CD8-positive, alpha-beta T cell (primary cell): ENCODE measurements at regions of chr7 and their contacts with region 1.

Region 1: DNA sequence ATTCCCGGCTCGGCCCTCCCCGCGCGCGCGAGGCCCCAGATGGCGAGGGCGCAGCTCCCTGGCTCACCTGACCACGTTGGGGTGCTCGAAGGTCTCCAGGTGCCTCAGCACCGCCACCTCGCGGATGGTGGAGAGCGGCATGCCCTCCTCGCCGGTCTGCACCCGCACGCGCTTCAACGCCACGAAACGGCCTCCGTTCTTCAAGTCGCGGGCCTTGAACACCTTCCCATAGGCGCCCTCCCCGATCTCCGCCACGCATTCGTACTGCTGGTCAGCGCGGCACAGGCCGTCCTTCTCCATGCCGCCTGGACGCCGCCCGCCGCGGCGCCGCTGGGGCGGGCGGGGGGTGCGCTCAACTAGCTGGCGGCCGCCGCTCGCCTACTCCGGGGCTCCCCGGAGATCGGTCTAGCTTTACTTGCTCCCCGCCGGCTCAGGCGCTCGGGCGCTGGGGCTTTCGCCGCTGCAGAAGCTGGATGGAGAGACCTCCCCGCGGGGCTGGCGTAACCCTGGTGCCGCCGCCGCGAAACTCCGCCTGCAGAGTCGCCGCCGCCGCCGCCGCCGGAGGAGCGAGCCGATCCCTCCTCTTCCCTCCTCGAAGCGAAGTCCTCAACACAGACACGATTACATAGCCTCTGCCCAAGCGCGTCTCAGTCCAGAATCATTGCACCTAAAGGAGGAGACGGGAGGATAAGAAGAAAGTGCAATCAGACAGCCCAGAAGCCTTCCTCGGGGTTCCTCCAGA is 3.2 kb downstream of the CDK6 start:
- DNase-seq: peak; percentile 78 to 93 (median 88)
- ATAC-seq: peak; percentile 71
- H3K4me3 ChIP-seq: peak overlapping the region; percentile 85 to 96
- H3K4me3 Mint-ChIP-seq: peak overlapping the region; percentile 98
- H3K27ac ChIP-seq: peak overlapping the region; percentile 46 to 68
- H3K27ac Mint-ChIP-seq: peak overlapping the region; percentile 92
- H3K4me1 ChIP-seq: peaks cover 39% of the 10 kb centered on the region
- H3K4me1 Mint-ChIP-seq: peaks cover 60% of the 10 kb centered on the region
- H3K27me3 ChIP-seq: peaks cover 0 to 3% of the 10 kb centered on the region in 2 experiments
- H3K27me3 Mint-ChIP-seq: peaks cover 4% of the 10 kb centered on the region
- CTCF ChIP-seq: peak; percentile 81

Region 2: DNA sequence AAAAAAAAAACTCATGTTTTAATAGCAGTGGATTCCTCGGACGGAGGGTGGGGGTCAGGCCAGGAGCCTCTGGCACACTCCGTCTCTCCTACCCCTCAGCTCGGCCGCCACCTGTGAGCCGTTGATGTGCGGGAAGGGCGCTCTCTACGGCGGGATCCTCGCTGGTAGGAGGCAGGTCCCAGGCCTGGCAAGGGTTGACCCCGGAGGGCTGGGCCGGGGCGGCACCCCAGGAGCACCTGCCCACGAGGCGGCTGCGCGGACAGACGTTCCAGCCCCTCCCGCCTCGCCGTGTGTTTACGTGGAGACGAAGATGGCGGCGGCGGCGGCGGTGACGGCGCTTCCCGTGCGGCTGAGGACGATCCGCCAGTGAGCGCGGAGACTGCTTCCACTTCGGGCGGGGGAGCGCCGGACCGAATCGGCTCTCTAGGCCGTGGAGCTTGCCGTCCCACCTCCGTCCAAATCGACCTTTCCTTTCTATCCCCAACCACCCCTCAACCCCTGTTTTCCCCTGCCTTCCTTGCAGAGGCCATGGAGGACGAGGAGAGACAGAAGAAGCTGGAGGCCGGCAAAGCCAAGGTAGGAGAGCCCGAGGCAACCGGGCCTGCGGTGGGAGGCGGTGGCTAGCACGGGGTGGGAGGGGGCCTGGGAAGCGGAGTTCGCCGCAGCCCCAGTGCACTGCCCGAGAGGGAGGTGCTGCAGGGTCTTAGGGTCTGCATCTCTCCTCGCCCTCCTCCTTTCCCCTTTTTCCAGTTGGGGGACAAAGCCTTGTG is 892.4 kb before region 1 on chr7 and contains the start of gene AKAP9:
- CTCF ChIA-PET with region 1: no interaction called
- POLR2A ChIA-PET with region 1: no interaction called
- intact Hi-C with region 1: loop called in 1 of 2 experiments (anchors 10 kb)
- DNase-seq: peak; percentile 71 to 93 (median 89)
- ATAC-seq: peak; percentile 84
- H3K4me3 ChIP-seq: peak within 1 kb of the TSS; percentile 78 to 92
- H3K4me3 Mint-ChIP-seq: peak within 1 kb of the TSS; percentile 93
- H3K27ac ChIP-seq: peak within 1 kb of the TSS; percentile 91 to 93
- H3K27ac Mint-ChIP-seq: peak within 1 kb of the TSS; percentile 96
- H3K4me1 ChIP-seq: peaks cover 21% of the 10 kb centered on the region
- H3K4me1 Mint-ChIP-seq: peaks cover 45% of the 10 kb centered on the region
- H3K27me3 ChIP-seq: no peaks in the 10 kb centered on the region
- H3K27me3 Mint-ChIP-seq: no peaks in the 10 kb centered on the region
- CTCF ChIP-seq: no peak
- total RNA-seq, gene AKAP9: 61.2 to 61.3 TPM

Region 3: DNA sequence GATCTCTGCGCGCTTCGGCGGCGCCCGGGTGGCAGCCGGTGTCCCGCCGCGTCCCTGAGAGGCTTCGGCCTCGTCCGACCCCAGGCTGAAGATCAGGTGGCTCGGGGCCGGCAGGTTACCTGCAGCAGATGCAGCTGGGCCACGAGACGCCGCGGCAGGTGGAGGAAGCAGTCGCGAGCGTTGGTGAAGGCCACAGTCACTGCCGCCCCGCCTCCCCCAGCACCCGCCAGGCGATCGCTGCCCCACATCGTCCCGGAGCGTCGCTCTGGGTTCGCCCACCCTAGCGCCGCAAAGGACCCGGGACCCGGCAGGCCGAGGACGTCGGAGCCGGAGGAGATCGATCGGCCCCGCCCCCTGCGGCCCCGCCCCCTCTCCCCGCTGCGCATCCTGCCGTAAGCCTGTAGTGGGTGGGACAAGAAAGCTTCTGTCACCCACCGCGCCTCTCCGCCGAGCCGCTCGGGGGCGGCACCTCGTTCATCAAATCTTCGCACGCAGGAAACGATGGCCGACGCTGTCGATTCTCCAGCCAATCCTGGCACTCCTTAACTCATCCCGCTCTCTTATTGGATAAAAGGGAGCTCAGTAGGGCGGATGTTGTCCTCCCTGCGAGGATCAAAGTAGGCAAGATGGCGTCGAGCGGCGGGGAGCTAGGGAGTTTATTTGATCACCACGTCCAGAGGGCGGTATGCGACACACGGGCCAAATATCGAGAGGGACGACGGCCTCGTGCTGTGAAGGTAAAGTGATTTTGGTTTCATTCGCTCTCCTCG is 304.8 kb before region 1 on chr7 and contains the starts of genes PEX1 and RBM48:
- CTCF ChIA-PET with region 1: interaction called, 3 read pairs
- POLR2A ChIA-PET with region 1: interaction called, 3 read pairs
- intact Hi-C with region 1: loop called (anchors 1 to 5 kb)
- DNase-seq: peak; percentile 90 to 99 (median 94)
- ATAC-seq: peak; percentile 89
- H3K4me3 ChIP-seq: peak within 1 kb of the TSS; percentile 94 to 95
- H3K4me3 Mint-ChIP-seq: peak within 1 kb of the TSS; percentile 91
- H3K27ac ChIP-seq: peak within 1 kb of the TSS; percentile 91 to 98
- H3K27ac Mint-ChIP-seq: peak within 1 kb of the TSS; percentile 98
- H3K4me1 ChIP-seq: peaks cover 22% of the 10 kb centered on the region
- H3K4me1 Mint-ChIP-seq: peaks cover 51% of the 10 kb centered on the region
- H3K27me3 ChIP-seq: no peaks in the 10 kb centered on the region
- H3K27me3 Mint-ChIP-seq: no peaks in the 10 kb centered on the region
- CTCF ChIP-seq: no peak
- total RNA-seq, gene PEX1: 17.8 to 18.1 TPM
- total RNA-seq, gene RBM48: 52.7 to 54.6 TPM

Region 4: GRCh38 chr7:92621026-92621540 is 212.1 kb before region 1 on chr7:
- CTCF ChIA-PET with region 1: interaction called, 44 read pairs
- POLR2A ChIA-PET with region 1: interaction called, 6 read pairs
- intact Hi-C with region 1: loop called (anchors 1 kb)
- DNase-seq: peak; percentile 53 to 92 (median 77)
- ATAC-seq: peak; percentile 93
- H3K4me3 ChIP-seq: no peak overlapping the region
- H3K4me3 Mint-ChIP-seq: peak overlapping the region; percentile 6
- H3K27ac ChIP-seq: peak overlapping the region in 1 of 2 experiments; percentile 33
- H3K27ac Mint-ChIP-seq: peak overlapping the region; percentile 79
- H3K4me1 ChIP-seq: peaks cover 18% of the 10 kb centered on the region
- H3K4me1 Mint-ChIP-seq: peaks cover 20% of the 10 kb centered on the region
- H3K27me3 ChIP-seq: no peaks in the 10 kb centered on the region
- H3K27me3 Mint-ChIP-seq: no peaks in the 10 kb centered on the region
- CTCF ChIP-seq: peak; percentile 60

Region 5: DNA sequence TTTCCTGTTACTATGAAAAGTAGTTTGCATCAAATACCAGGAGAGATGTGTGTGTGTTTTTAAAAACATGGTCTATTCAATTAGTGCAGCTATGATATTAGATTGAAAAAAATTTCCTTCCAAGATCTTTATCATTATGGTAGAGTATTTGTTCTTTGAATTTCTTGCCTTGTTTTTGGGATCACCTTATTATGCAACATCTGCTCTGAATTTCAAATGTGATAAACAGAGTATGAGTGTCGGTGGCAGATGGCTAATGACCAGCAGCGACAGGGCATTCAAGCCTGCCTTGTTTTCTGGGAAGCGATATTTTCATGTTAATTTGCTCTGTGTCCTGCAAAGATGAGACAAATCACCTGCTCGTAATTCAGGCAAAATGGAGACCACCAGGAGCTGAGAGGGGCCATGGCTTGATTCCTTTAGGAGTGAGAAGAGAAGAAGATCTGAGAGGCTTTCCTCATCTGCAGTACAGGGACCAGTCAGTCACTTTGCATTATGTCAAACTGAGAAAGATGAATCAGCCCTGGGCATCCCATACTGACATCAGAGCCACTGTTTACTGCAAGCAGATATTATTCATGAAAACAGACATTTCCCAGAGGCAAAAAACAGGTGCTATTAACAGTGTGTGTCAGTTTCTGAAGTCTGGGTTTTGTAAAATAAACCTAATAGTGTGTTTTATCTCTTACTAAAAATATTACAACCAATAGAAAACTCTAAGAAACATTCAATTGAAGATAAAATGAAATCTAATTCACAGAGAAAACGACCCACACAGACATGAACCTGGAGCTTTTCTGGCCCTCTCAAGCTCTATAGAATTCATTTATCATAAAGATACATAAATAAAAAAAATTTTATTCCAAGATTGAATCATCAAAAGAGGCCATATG is 64.4 kb before region 1 on chr7:
- CTCF ChIA-PET with region 1: no interaction called
- POLR2A ChIA-PET with region 1: interaction called, 3 read pairs
- intact Hi-C with region 1: loop called in 1 of 2 experiments (anchors 5 kb)
- DNase-seq: no peak
- ATAC-seq: no peak
- H3K4me3 ChIP-seq: no peak overlapping the region
- H3K4me3 Mint-ChIP-seq: no peak overlapping the region
- H3K27ac ChIP-seq: no peak overlapping the region
- H3K27ac Mint-ChIP-seq: no peak overlapping the region
- H3K4me1 ChIP-seq: no peaks in the 10 kb centered on the region
- H3K4me1 Mint-ChIP-seq: peaks cover 19% of the 10 kb centered on the region
- H3K27me3 ChIP-seq: no peaks in the 10 kb centered on the region
- H3K27me3 Mint-ChIP-seq: no peaks in the 10 kb centered on the region
- CTCF ChIP-seq: no peak

Region 6: DNA sequence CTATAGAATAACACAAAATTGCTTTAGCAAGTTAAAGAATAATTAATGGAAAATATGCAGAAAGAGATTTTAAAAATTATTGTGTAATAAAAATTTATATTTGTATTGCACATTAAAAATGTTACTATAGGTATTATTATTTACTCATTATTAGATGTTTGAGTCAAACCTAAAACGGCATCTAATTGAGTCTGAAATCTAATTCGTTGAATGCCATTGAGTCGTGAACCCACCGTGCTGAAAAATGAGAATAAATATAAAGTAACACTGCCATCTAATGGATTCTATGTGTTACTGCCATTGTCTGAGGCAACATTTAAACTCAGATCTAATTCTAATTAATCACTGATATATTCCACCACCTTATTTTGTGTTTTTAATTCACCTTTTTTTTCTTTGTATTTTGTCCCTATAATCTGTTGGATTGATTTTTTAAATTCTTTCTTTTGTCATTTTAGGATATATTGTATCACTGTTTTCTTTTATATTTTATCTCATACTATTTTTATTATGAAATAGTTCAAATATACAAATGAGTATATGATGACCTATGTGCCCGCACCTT is 222.4 kb after region 1 on chr7:
- CTCF ChIA-PET with region 1: interaction called, 9 read pairs
- POLR2A ChIA-PET with region 1: no interaction called
- intact Hi-C with region 1: loop called (anchors 1 to 2 kb)
- DNase-seq: peak in 2 of 9 experiments; percentile 49 to 65
- ATAC-seq: peak; percentile 79
- H3K4me3 ChIP-seq: no peak overlapping the region
- H3K4me3 Mint-ChIP-seq: no peak overlapping the region
- H3K27ac ChIP-seq: no peak overlapping the region
- H3K27ac Mint-ChIP-seq: no peak overlapping the region
- H3K4me1 ChIP-seq: no peaks in the 10 kb centered on the region
- H3K4me1 Mint-ChIP-seq: no peaks in the 10 kb centered on the region
- H3K27me3 ChIP-seq: no peaks in the 10 kb centered on the region
- H3K27me3 Mint-ChIP-seq: no peaks in the 10 kb centered on the region
- CTCF ChIP-seq: peak; percentile 98

Region 7: DNA sequence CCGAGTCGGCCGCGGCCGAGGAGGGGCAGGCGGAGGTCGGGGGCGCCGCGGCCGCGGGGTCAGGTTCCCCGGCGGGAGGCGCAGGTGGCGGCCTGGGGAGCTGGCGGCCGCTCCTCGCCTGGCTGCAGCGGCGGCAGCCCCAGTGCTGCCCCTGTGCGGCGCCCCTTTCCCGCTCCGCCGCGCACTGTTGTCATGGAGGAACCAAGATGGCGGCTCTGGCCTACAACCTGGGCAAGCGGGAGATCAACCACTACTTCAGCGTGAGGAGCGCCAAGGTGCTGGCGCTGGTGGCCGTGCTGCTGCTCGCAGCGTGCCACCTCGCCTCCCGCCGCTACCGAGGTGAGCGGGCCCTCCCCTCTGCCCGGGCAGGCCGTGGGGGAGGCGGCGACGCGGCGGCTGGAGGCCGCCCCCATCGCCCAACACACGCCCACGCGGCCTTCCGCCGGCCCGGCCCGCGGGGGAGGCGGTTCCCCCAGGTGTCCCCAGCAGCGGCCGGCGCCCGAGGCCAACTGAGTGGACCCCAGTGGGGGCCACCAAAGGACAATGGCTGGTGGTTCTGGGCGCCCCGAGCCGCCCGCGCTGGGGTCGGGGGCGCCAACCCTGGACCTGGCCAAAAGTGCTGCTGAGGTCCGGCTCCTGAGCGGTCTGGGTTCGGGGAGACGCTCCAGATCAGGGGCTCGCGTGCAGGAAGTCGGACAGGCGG is 1676.8 kb after region 1 on chr7:
- CTCF ChIA-PET with region 1: no interaction called
- POLR2A ChIA-PET with region 1: no interaction called
- intact Hi-C with region 1: loop called in 1 of 2 experiments (anchors 5 kb)
- DNase-seq: peak; percentile 33 to 84 (median 68)
- ATAC-seq: peak; percentile 75
- H3K4me3 ChIP-seq: peak overlapping the region; percentile 78 to 79
- H3K4me3 Mint-ChIP-seq: peak overlapping the region; percentile 87
- H3K27ac ChIP-seq: peak overlapping the region; percentile 75 to 89
- H3K27ac Mint-ChIP-seq: peak overlapping the region; percentile 94
- H3K4me1 ChIP-seq: peaks cover 37% of the 10 kb centered on the region
- H3K4me1 Mint-ChIP-seq: peaks cover 47% of the 10 kb centered on the region
- H3K27me3 ChIP-seq: no peaks in the 10 kb centered on the region
- H3K27me3 Mint-ChIP-seq: no peaks in the 10 kb centered on the region
- CTCF ChIP-seq: no peak